HCT116 (cell line): ENCODE measurements at regions of chrX and their contacts with region 1.

Region 1: DNA sequence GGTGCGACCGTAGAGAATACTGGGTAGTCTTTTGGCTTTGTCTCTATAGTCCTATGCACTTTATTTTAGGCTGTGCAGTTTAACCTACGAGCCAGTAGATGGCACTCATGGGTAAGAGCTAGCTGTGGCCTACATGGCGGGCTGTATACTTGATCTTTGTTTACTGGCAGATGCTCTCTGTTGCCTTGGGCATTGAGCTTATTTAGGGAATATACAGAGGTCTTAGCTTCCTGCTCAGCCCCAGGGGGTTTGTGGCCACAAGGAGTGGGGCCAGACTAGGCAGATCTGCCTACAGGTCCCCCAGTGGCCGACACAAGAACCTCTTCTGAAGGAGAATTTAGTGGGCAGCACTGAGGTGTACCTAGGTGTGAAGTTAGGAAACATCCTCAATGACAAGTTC is 227.6 kb upstream of the HDX start:
- DNase-seq: no peak
- ATAC-seq: peak; percentile 81
- H3K4me3 ChIP-seq: no peak overlapping the region
- H3K27ac ChIP-seq: no peak overlapping the region
- H3K4me1 ChIP-seq: no peaks in the 10 kb centered on the region
- H3K27me3 ChIP-seq: no peaks in the 10 kb centered on the region
- CTCF ChIP-seq: peak; percentile 35 to 63 (median 61); a peak in 4 of 6 replicates
- POLR2A ChIP-seq: no peak
- RAD21 ChIP-seq: peak; percentile 40; the same call in 1 of the 2 replicates

Region 2: GRCh38 chrX:84118761-84119160 is 611.0 kb before region 1 on chrX:
- CTCF ChIA-PET with region 1: no interaction called
- POLR2A ChIA-PET with region 1: no interaction called
- RAD21 ChIA-PET with region 1: no interaction called
- intact Hi-C with region 1: no loop called
- DNase-seq: no peak
- ATAC-seq: no peak
- H3K4me3 ChIP-seq: no peak overlapping the region
- H3K27ac ChIP-seq: no peak overlapping the region
- H3K4me1 ChIP-seq: no peaks in the 10 kb centered on the region
- H3K27me3 ChIP-seq: no peaks in the 10 kb centered on the region
- CTCF ChIP-seq: no peak
- POLR2A ChIP-seq: no peak
- RAD21 ChIP-seq: no peak

Region 3: DNA sequence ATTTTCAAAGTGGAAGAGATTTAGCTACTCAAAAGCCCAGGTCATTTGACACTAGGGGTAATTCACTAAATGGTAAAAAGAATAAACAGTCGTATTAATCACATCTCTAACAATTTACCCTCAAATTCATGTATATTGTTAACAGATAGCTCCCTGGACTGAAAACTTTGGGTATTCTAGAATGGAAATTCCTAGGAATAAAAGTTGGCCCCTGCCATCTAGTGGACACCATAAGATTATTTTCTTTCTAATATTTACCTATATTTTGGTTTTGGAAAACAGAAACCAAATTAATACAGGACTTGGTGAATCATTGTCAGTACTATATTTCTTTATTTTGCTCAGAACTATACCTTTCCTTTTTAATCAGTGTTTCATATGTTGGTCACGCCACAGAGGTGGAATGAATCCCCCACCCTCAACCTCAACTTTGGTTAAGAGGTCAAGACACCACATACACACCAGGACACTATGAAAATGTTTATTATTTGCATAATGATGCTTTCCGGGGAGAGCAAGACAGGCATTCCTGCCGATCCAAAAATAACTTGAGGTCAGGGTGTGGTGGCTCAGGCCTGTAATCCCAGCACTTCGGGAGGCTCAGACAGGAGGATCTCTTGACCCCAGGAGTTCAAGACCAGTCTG is 177.6 kb after region 1 on chrX:
- CTCF ChIA-PET with region 1: interaction called, 6 read pairs
- POLR2A ChIA-PET with region 1: no interaction called
- RAD21 ChIA-PET with region 1: no interaction called
- intact Hi-C with region 1: loop called (anchors 5 kb)
- DNase-seq: no peak
- ATAC-seq: no peak; the same call in 1 of the 2 replicates
- H3K4me3 ChIP-seq: no peak overlapping the region
- H3K27ac ChIP-seq: no peak overlapping the region
- H3K4me1 ChIP-seq: no peaks in the 10 kb centered on the region
- H3K27me3 ChIP-seq: no peaks in the 10 kb centered on the region
- CTCF ChIP-seq: peak in 1 of 3 experiments; percentile 36; a peak in 1 of 6 replicates
- POLR2A ChIP-seq: no peak
- RAD21 ChIP-seq: no peak

Region 4: DNA sequence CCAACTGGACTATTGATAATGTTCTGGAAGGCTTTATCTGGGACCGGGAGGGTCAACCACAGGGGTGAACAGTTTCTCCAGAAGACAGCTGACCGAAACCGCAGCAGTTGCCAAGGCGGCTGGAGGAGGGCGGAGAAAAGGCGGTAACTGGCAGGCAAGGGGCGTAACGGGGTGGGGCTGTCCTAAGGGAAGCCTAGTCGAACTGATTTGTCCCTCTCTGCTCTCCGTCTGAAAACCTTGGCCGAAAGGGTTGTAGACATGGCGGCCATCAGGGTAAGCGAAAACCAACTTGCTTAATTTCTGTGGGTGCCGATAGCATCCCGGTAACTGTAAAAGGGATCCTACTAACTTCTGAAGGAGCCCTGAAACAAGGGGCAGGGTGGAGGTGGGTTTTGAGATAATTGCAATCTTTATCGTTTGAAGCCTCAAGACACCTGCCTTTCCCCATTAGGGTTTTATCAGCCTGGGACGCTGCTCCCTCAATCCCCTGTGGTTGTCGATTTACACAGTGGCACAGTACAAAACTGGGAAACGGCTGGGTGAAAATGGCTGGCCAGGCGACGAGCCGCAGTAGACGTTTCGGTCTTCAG is 273.9 kb after region 1 on chrX and contains the start of gene APOOL:
- CTCF ChIA-PET with region 1: no interaction called
- POLR2A ChIA-PET with region 1: no interaction called
- RAD21 ChIA-PET with region 1: no interaction called
- intact Hi-C with region 1: no loop called
- DNase-seq: peak; percentile 78
- ATAC-seq: peak; percentile 90
- H3K4me3 ChIP-seq: peak within 1 kb of the TSS; percentile 72 to 74
- H3K27ac ChIP-seq: 0 out of 2 replicates have a peak within 1 kb of the TSS, but pooled peaks have one; percentile 26
- H3K4me1 ChIP-seq: peaks cover 2 to 3% of the 10 kb centered on the region in 2 experiments; a peak in 1 of 4 replicates
- H3K27me3 ChIP-seq: no peaks in the 10 kb centered on the region
- CTCF ChIP-seq: no peak
- POLR2A ChIP-seq: no peak
- RAD21 ChIP-seq: no peak
- total RNA-seq, gene APOOL: 24.5 TPM

Region 5: GRCh38 chrX:85052636-85053343 is 323.0 kb after region 1 on chrX:
- CTCF ChIA-PET with region 1: interaction called, 8 read pairs
- POLR2A ChIA-PET with region 1: no interaction called
- RAD21 ChIA-PET with region 1: no interaction called
- intact Hi-C with region 1: loop called (anchors 5 kb)
- DNase-seq: peak; percentile 15
- ATAC-seq: no peak
- H3K4me3 ChIP-seq: no peak overlapping the region
- H3K27ac ChIP-seq: peak overlapping the region; percentile 45; the same call in 1 of the 2 replicates
- H3K4me1 ChIP-seq: peaks cover 0 to 17% of the 10 kb centered on the region in 2 experiments; a peak in 3 of 4 replicates
- H3K27me3 ChIP-seq: no peaks in the 10 kb centered on the region
- CTCF ChIP-seq: no peak; a peak in 1 of 6 replicates
- POLR2A ChIP-seq: no peak
- RAD21 ChIP-seq: peak; percentile 35; the same call in 1 of the 2 replicates